ENCODE measurements at regions of chr9 and their contacts with region 1.

Region 1: DNA sequence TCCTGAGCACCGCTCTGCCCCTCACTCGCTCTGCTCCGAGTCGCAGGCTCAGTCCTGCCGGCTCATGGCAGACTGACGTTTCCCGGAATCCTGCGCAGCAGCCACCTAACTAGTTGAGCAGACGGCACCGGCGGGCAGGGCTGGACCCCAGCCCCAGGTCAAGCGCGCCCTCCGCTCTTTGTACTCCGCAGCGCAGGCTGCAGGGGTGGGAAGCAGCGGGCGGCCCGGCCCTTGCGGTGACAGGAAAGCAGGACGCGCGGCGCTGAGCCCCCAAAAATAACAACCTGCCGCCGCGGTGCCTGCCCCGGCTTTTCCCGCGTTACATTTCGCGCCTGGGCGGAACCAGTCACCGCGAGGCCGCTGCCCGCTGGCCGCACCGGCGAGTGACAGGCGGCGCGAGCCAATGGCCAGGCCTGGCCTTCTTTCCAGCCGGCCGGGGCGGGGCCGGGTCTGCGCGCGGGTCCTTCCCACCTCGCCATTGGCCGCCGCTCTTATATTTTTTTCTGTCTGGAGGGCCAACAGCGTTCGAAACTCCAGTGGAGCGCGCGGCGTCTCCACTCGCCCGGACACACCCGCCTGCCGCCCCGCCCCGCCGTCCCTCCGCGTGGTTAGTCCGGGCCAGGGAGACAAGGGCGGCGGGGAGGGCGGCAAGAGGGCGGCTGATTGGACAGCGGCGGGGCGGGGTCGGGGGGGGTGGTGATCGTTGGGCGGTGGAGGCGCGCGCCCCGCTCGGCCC is at the start of gene ZNF367:
- DNase-seq: peak; percentile 89 to 97 (median 94)
- ATAC-seq: peak; percentile 88
- H3K4me3 ChIP-seq: peak within 1 kb of the TSS; percentile 95
- H3K27ac ChIP-seq: peak within 1 kb of the TSS; percentile 100
- H3K4me1 ChIP-seq: peaks cover 23 to 26% of the 10 kb centered on the region in 2 experiments; a peak in 4 of 5 replicates
- H3K27me3 ChIP-seq: no peaks in the 10 kb centered on the region
- CTCF ChIP-seq: 0 out of 6 replicates have a peak, but pooled peaks of 1 of the 3 experiments have one; percentile 1
- EP300 ChIP-seq: no peak
- POLR2A ChIP-seq: peak; percentile 91
- RAD21 ChIP-seq: no peak
- polyA plus RNA-seq, gene ZNF367: 2.7 TPM

Region 2: GRCh38 chr9:96344458-96345180 is 73.6 kb before region 1 on chr9:
- CTCF ChIA-PET with region 1: no interaction called
- POLR2A ChIA-PET with region 1: interaction called, 5 read pairs
- in situ Hi-C with region 1: no loop called
- intact Hi-C with region 1: loop called (anchors 5 kb)
- DNase-seq: peak; percentile 71 to 81 (median 75)
- ATAC-seq: peak; percentile 77
- H3K4me3 ChIP-seq: no peak overlapping the region
- H3K27ac ChIP-seq: no peak overlapping the region; the same call in 2 of the 3 replicates
- H3K4me1 ChIP-seq: peaks cover 5 to 12% of the 10 kb centered on the region in 2 experiments
- H3K27me3 ChIP-seq: 0 out of 5 replicates have a peak, but pooled peaks cover 0 to 5% of the 10 kb centered on the region in 2 experiments
- CTCF ChIP-seq: no peak
- EP300 ChIP-seq: no peak
- POLR2A ChIP-seq: no peak
- RAD21 ChIP-seq: no peak

Measured in K562 (cell line).